A673 (cell line): ENCODE measurements at regions of chr17 and their contacts with region 1.

Region 1: DNA sequence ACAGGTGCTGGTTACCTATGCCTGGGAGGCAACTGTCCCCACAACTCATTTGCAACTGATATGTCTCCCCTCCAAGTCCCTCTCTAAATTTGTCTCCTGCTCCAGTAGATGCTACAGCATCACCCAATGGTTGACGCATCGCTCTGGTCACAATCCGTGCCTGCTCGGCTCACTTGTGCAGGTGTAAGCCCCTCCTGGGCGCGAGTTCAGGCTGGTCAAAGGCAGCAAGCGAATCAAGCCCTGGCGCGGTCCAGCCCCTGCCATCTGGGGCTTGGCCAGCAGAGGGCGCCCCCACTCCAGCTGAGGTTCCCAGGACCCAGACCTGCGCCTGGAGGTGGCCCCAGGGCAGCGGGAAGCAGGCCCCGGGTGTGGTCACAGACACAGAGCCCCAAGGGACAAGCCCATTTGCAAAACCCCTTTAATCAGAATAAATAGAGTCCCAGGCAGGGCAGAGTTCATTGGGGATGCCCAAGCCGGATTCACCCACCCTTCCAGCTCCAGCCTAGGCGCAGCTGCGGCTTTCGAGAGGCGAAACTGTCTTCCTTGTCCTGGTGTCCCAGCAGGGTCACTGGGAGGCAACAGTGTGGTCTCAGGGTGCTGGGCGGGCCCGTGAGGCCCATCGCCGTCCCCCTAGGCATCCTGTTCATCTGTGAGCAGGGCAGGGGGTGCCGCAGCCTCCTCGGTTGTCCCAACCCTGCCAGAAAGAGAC is 15.9 kb downstream of the TMC6 start:
- DNase-seq: peak; percentile 70
- H3K4me3 ChIP-seq: no peak overlapping the region
- H3K27ac ChIP-seq: no peak overlapping the region
- H3K4me1 ChIP-seq: no peaks in the 10 kb centered on the region
- H3K27me3 ChIP-seq: no peaks in the 10 kb centered on the region
- CTCF ChIP-seq: peak; percentile 98

Region 2: DNA sequence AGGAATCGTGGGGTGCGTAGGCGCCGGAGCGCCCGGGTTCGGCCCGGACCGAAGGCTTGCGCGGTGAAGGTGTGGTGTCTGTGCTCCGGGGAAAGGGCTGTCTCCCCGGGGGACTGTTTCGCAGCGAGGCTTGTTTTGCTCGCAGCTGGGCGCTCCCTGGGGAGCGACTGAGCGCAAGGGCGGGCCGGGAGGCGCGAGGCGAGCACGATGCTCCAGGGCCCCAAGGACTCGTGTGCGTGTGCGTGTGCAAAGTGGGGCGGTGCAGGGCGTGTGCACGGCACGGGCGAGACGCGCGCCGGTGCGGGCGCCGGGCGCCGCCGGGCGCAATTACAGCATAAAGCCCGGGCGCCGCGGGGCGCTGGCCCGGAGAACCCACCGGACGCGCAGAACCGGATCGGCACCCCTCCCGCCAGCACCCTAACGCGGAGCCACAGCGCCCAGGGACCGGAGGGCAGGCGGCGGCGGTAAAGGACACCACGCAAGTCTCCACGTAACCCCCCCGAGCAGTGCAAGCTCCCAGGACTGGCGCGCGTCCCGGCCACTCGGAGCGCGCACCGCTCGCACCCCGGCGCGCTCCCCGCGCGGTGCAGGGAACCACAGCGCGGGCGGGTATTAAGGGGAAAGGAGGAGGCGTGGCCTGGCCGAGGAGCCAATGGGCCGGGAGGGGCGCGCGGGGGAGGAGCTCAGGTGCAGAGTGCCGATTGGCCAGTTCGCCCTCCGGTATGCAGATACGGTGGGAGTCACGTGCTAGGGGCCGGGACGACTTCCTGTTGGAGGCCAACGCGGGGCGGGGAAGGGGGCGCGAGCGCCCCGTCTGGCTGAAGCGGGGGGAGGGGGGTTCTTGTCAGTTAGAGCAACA is 154.6 kb before region 1 on chr17 and contains the start of gene TNRC6C:
- CTCF ChIA-PET with region 1: no interaction called
- POLR2A ChIA-PET with region 1: no interaction called
- intact Hi-C with region 1: no loop called
- DNase-seq: peak; percentile 99
- H3K4me3 ChIP-seq: peak within 1 kb of the TSS; percentile 73
- H3K27ac ChIP-seq: peak within 1 kb of the TSS; percentile 69
- H3K4me1 ChIP-seq: peaks cover 22% of the 10 kb centered on the region
- H3K27me3 ChIP-seq: peaks cover 43% of the 10 kb centered on the region
- CTCF ChIP-seq: no peak; the same call in 1 of the 2 replicates
- total RNA-seq, gene TNRC6C: 26.7 and 30.2 TPM in 2 replicates

Region 3: GRCh38 chr17:77974396-77974795 is 138.3 kb before region 1 on chr17:
- CTCF ChIA-PET with region 1: no interaction called
- POLR2A ChIA-PET with region 1: no interaction called
- intact Hi-C with region 1: no loop called
- DNase-seq: no peak
- H3K4me3 ChIP-seq: no peak overlapping the region
- H3K27ac ChIP-seq: no peak overlapping the region
- H3K4me1 ChIP-seq: no peaks in the 10 kb centered on the region
- H3K27me3 ChIP-seq: no peaks in the 10 kb centered on the region
- CTCF ChIP-seq: no peak

Region 4: DNA sequence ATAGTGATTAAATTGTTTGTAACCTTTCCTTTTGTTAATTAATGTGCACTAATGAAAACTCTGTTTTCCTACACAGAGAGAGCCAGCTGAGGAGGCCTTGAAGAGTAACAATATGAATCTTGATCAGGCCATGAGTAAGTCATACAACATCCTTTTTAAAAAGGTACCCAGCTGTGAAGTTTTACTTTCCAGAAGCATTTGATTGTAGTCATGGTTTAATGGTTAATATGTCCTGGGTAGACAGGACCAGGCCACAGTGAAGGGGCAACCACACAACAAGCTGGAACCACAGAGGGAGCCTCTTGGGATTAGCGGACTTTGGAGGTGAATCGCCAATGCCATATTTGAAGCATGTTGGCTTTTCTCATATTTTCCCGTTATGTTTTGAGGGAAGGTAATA is 39.7 kb before region 1 on chr17:
- CTCF ChIA-PET with region 1: no interaction called
- POLR2A ChIA-PET with region 1: no interaction called
- intact Hi-C with region 1: no loop called
- DNase-seq: no peak
- H3K4me3 ChIP-seq: no peak overlapping the region
- H3K27ac ChIP-seq: no peak overlapping the region
- H3K4me1 ChIP-seq: no peaks in the 10 kb centered on the region
- H3K27me3 ChIP-seq: no peaks in the 10 kb centered on the region
- CTCF ChIP-seq: no peak

Region 5: GRCh38 chr17:78082988-78083387 is 29.7 kb before region 1 on chr17:
- CTCF ChIA-PET with region 1: interaction called, 12 read pairs
- POLR2A ChIA-PET with region 1: no interaction called
- intact Hi-C with region 1: no loop called
- DNase-seq: no peak
- H3K4me3 ChIP-seq: no peak overlapping the region
- H3K27ac ChIP-seq: no peak overlapping the region
- H3K4me1 ChIP-seq: no peaks in the 10 kb centered on the region
- H3K27me3 ChIP-seq: no peaks in the 10 kb centered on the region
- CTCF ChIP-seq: no peak

Region 6: DNA sequence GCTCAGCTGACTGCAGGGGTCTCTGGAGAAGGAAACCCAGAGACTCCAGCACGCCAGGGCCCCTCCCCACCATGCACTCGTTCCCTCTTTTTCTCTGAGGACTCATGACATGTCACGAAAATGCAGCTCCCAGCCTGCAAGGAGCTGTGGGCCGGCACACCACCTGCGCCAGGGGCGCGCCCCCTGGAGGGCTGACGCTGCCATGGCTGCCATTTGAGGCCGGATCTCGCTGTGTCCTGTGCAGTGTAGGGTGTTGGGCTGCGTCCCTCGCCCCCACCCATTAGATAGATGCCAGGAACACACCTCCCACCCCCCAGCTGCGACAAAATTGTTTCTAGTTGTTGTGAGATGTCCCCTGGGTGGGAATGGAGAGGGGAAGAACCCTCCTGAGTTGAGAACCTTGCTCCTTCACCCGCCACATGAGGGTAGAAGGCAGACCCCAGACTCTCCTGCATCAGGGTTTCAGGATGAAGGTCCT is 63.9 kb after region 1 on chr17:
- CTCF ChIA-PET with region 1: no interaction called
- POLR2A ChIA-PET with region 1: no interaction called
- intact Hi-C with region 1: loop called (anchors 2 kb)
- DNase-seq: peak; percentile 75
- H3K4me3 ChIP-seq: no peak overlapping the region
- H3K27ac ChIP-seq: no peak overlapping the region
- H3K4me1 ChIP-seq: peaks cover 8% of the 10 kb centered on the region
- H3K27me3 ChIP-seq: no peaks in the 10 kb centered on the region
- CTCF ChIP-seq: peak; percentile 97

Region 7: GRCh38 chr17:78250891-78251794 is 138.5 kb after region 1 on chr17:
- CTCF ChIA-PET with region 1: interaction called, 4 read pairs
- POLR2A ChIA-PET with region 1: no interaction called
- intact Hi-C with region 1: loop called (anchors 2 kb)
- DNase-seq: peak; percentile 91
- H3K4me3 ChIP-seq: no peak overlapping the region
- H3K27ac ChIP-seq: no peak overlapping the region
- H3K4me1 ChIP-seq: no peaks in the 10 kb centered on the region
- H3K27me3 ChIP-seq: no peaks in the 10 kb centered on the region
- CTCF ChIP-seq: peak; percentile 100